ENCODE measurements at regions of chr7 and their contacts with region 1.

Region 1: DNA sequence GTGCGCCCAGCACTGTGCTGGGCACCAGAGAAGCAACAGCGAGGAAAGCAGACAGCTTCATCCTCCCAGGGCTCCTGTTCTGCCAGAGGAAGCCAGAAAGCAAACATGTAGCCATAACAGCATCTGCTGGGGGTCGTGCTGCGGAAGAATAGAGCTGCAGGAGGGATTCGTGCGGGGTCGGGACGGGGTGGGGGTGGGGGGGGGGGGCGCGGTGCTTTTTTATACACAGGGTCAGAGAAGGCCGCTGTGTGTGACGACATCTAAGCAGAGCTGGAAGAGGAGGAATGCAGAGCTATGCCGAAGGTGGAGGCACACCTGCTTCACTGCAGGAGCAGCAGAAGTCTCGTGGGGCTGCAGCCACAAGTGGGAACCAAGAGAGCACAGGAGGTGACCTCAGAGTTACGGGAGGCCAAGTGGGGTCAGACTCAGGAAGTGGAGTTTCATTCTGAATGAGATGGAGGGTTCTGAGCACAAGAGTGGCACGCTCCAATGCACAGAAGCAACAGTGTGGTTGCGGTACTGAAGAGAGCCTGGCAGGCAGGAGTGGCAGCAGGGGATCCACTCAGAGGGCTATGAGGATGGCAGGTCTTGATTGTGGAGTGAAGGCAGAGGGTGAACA is 11.1 kb downstream of the PKD1L1 start:
- DNase-seq: no peak
- H3K4me3 ChIP-seq: no peak overlapping the region
- H3K27ac ChIP-seq: no peak overlapping the region
- H3K4me1 ChIP-seq: peaks cover 22% of the 10 kb centered on the region
- H3K27me3 ChIP-seq: no peaks in the 10 kb centered on the region
- CTCF ChIP-seq: no peak
- POLR2A ChIP-seq: no peak

Region 2: DNA sequence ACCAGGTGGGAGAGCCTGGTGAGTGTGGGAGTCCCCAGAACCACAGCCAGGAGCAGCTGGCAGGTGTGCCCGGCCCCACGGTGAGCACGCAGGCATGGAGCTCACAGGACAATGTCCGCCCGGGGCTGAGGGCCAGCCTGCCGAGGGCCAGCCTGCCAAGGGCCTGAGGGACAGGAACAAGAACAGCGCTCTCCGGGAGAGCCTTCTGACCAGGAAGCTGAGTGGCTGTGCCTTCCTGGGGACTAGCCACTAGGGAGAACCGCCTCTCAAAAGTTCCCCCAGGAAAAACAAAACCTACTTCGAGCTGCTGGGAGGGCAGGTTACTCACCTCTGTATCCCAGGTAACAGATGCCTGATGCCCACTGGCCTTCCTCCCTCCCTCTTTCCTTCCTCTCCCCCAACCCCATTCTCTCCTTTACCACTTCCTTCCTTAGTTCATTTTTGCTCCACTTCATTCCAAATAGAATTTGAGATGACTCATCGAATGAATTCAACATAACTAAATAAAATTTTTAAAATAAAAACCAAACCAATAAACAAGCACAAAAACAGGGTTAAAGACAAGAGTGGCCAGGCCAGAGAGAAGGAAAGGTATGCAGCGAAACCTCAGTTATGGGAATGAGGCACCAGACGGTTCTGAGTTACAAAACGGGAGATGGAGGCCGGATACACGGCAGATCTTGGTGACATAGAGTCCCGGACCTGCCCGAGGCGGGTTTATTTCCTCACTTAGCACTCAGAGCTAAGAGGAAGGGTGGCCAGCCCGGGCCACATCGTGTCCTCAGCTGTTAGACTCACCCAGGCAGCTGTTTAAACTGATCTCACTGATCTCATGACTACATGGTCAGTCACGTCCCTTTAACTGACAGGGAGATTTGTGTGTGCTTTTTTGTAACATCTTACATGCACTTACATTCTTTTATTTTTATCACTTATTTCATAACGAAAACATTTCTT is 483.8 kb before region 1 on chr7:
- CTCF ChIA-PET with region 1: no interaction called
- POLR2A ChIA-PET with region 1: no interaction called
- dilution Hi-C with region 1: no loop called
- intact Hi-C with region 1: loop called (anchors 1 kb)
- DNase-seq: peak; percentile 74
- H3K4me3 ChIP-seq: peak overlapping the region in 2 of 3 experiments; percentile 38 to 72
- H3K27ac ChIP-seq: peak overlapping the region; percentile 99
- H3K4me1 ChIP-seq: peaks cover 46% of the 10 kb centered on the region
- H3K27me3 ChIP-seq: no peaks in the 10 kb centered on the region
- CTCF ChIP-seq: no peak
- POLR2A ChIP-seq: no peak

Region 3: GRCh38 chr7:47786557-47787248 is 150.5 kb before region 1 on chr7:
- CTCF ChIA-PET with region 1: interaction called, 4 read pairs
- POLR2A ChIA-PET with region 1: no interaction called
- dilution Hi-C with region 1: no loop called
- intact Hi-C with region 1: loop called (anchors 2 kb)
- DNase-seq: peak; percentile 98
- H3K4me3 ChIP-seq: no peak overlapping the region
- H3K27ac ChIP-seq: peak overlapping the region; percentile 100
- H3K4me1 ChIP-seq: peaks cover 51% of the 10 kb centered on the region
- H3K27me3 ChIP-seq: no peaks in the 10 kb centered on the region
- CTCF ChIP-seq: no peak
- POLR2A ChIP-seq: no peak

Region 4: GRCh38 chr7:47979145-47979831 is 42.1 kb after region 1 on chr7 and contains the start of gene HUS1:
- CTCF ChIA-PET with region 1: no interaction called
- POLR2A ChIA-PET with region 1: no interaction called
- dilution Hi-C with region 1: no loop called
- intact Hi-C with region 1: loop called (anchors 1 kb)
- DNase-seq: peak; percentile 52
- H3K4me3 ChIP-seq: peak within 1 kb of the TSS; percentile 70 to 93 (median 89)
- H3K27ac ChIP-seq: peak within 1 kb of the TSS; percentile 46
- H3K4me1 ChIP-seq: peaks cover 11% of the 10 kb centered on the region
- H3K27me3 ChIP-seq: peaks cover 0 to 4% of the 10 kb centered on the region in 2 experiments
- CTCF ChIP-seq: no peak
- POLR2A ChIP-seq: peak; percentile 43
- total RNA-seq, gene HUS1: 45.0 and 49.7 TPM in 2 replicates

Region 5: DNA sequence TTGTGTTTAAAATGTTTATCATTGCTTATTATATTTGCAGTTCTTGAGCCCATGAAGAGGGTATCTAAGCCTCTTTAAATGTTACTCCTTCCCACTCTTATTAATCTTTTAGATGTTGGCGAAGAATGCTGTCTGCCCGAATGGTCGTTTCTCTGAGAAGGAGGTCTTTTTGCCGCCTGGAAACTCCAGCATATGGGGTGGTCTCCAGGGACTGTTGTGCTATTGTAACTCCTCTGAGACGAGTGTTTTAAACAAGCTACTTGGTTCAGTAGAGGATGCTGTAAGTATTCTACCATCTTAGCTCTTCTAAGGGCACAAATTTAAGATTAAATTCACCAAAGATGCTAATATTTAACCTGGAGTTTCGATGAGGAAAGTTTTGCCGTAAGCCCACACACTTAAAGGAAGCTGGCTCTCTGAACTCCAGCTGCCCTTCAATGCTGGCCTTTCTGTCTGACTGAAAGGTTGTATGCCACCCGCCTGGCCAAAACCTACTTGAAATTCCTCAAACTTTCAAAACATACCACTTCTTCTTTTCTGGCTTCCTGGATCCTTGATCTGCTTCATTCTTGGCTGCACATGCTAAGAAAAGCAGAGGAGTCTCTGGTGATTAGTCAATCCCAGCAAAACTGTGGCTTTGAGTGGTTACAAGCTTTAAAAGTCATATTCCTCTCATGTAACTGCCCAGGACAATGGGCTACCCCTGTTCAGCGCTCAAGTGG is 308.7 kb after region 1 on chr7:
- CTCF ChIA-PET with region 1: no interaction called
- POLR2A ChIA-PET with region 1: no interaction called
- dilution Hi-C with region 1: no loop called
- intact Hi-C with region 1: loop called (anchors 2 kb)
- DNase-seq: peak; percentile 3
- H3K4me3 ChIP-seq: no peak overlapping the region
- H3K27ac ChIP-seq: no peak overlapping the region
- H3K4me1 ChIP-seq: peaks cover 54% of the 10 kb centered on the region
- H3K27me3 ChIP-seq: no peaks in the 10 kb centered on the region
- CTCF ChIP-seq: no peak
- POLR2A ChIP-seq: no peak